ENCODE measurements at regions of chr4 and their contacts with region 1.

Region 1: GRCh38 chr4:86895692-86896488 is 3.7 kb upstream of the C4orf36 start:
- DNase-seq: no peak
- H3K4me3 ChIP-seq: no peak overlapping the region
- H3K27ac ChIP-seq: no peak overlapping the region
- H3K4me1 ChIP-seq: no peaks in the 10 kb centered on the region
- H3K27me3 ChIP-seq: no peaks in the 10 kb centered on the region
- CTCF ChIP-seq: peak; percentile 67 to 88 (median 76)
- POLR2A ChIP-seq: no peak

Region 2: GRCh38 chr4:86497980-86498862 is 397.7 kb before region 1 on chr4:
- intact Hi-C with region 1: loop called (anchors 5 kb)
- DNase-seq: no peak
- H3K4me3 ChIP-seq: no peak overlapping the region
- H3K27ac ChIP-seq: no peak overlapping the region
- H3K4me1 ChIP-seq: no peaks in the 10 kb centered on the region
- H3K27me3 ChIP-seq: no peaks in the 10 kb centered on the region
- CTCF ChIP-seq: peak; percentile 70 to 79 (median 70)
- POLR2A ChIP-seq: no peak

Region 3: GRCh38 chr4:86834901-86835300 is 61.0 kb before region 1 on chr4:
- intact Hi-C with region 1: no loop called
- DNase-seq: no peak
- H3K4me3 ChIP-seq: no peak overlapping the region
- H3K27ac ChIP-seq: no peak overlapping the region
- H3K4me1 ChIP-seq: no peaks in the 10 kb centered on the region
- H3K27me3 ChIP-seq: no peaks in the 10 kb centered on the region
- CTCF ChIP-seq: no peak
- POLR2A ChIP-seq: no peak